ENCODE measurements at regions of chr2 and their contacts with region 1.

Region 1: GRCh38 chr2:85888684-85889626 is at the start of gene ST3GAL5:
- DNase-seq: peak; percentile 52 to 94
- H3K4me3 ChIP-seq: peak within 1 kb of the TSS; percentile 85 to 95
- H3K27ac ChIP-seq: peak within 1 kb of the TSS; percentile 85 to 88
- H3K4me1 ChIP-seq: peaks cover 4 to 36% of the 10 kb centered on the region in 2 donors
- H3K27me3 ChIP-seq: no peaks in the 10 kb centered on the region
- CTCF ChIP-seq: peak; percentile 57 to 72 (median 58)
- total RNA-seq, gene ST3GAL5: 21.0 TPM

Region 2: DNA sequence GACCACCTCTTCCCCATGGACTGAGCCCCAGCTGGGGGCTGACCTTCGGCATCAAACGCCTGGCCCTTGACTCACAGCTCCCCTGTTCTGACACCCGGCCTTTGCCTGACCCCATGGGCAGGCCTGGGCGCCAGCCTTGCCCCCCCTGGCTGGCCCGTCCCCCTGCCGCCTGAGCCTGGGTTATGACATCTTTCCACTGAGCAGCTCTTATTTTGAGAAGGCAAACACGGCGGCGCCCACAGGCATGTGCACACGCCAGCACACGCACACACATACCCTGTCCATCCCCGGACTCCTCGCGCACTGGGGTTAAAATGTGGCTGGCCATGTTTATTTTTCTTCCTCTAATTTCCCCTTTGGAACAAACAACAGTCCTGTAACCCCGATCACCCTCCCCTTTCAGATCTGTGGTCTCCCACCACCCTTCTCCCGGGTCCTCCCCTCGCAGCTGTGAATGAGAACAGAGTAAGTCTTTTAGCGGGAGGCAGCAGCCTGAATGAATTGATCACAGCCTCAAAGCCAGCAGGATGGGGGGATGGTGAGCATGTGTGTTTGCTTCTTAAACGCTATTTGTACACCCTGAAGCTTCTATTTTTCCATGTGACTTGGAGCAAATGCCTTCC is 147.0 kb before region 1 on chr2:
- intact Hi-C with region 1: loop called (anchors 5 kb)
- DNase-seq: peak; percentile 78 to 96
- H3K4me3 ChIP-seq: peak overlapping the region in 1 of 2 donors; percentile 46
- H3K27ac ChIP-seq: peak overlapping the region; percentile 97 to 98
- H3K4me1 ChIP-seq: peaks cover 36 to 65% of the 10 kb centered on the region in 2 donors
- H3K27me3 ChIP-seq: no peaks in the 10 kb centered on the region
- CTCF ChIP-seq: no peak

Region 3: DNA sequence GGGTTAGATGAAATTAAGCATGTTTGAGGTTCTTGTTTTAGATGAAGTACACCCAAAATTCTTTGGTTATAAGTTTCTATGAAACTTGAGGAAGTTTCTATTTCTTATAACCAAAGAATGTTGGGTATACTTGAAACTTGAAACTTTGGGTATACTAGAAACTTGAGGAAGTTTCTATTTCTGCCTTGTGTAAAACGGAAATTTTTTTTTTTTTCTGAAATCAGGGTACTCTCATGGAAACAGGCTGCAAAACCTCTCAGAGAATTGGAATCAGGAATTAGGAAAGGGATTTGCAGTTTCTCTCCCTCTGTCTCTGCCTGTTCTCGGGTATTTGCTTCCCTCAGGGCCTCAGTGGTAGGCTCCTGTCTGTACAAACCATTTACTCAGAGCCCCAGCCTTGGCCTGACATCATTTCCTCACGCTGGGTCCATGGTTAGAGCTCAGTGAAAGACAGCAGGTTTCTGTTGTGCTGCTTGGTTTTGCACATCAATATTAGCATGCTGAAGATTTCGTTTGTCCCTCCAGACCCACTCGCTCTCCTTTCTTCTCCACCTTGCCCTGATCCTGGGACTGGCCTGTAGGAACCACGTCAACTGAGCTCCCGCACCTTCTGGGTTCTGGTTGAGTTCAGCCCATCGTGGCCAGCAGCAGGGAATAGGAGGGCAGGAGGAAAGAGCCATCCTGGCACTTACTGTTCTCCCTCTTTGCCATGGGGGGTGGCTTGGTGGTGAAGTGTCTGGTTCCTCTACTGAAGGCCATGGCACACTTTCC is 110.3 kb after region 1 on chr2:
- intact Hi-C with region 1: loop called (anchors 2 kb)
- DNase-seq: peak in 1 of 2 donors; percentile 69
- H3K4me3 ChIP-seq: peak overlapping the region in 1 of 2 donors; percentile 37
- H3K27ac ChIP-seq: peak overlapping the region; percentile 92 to 95
- H3K4me1 ChIP-seq: peaks cover 36 to 60% of the 10 kb centered on the region in 2 donors
- H3K27me3 ChIP-seq: no peaks in the 10 kb centered on the region
- CTCF ChIP-seq: no peak

Region 4: GRCh38 chr2:86011449-86011941 is 122.5 kb after region 1 on chr2:
- intact Hi-C with region 1: no loop called
- DNase-seq: peak in 1 of 2 donors; percentile 27
- H3K4me3 ChIP-seq: no peak overlapping the region
- H3K27ac ChIP-seq: no peak overlapping the region
- H3K4me1 ChIP-seq: no peaks in the 10 kb centered on the region
- H3K27me3 ChIP-seq: no peaks in the 10 kb centered on the region
- CTCF ChIP-seq: no peak

Region 5: GRCh38 chr2:86035883-86036668 is 147.1 kb after region 1 on chr2:
- intact Hi-C with region 1: loop called (anchors 2 kb)
- DNase-seq: peak; percentile 54 to 83
- H3K4me3 ChIP-seq: no peak overlapping the region
- H3K27ac ChIP-seq: peak overlapping the region; percentile 84 to 89
- H3K4me1 ChIP-seq: peaks cover 22 to 28% of the 10 kb centered on the region in 2 donors
- H3K27me3 ChIP-seq: no peaks in the 10 kb centered on the region
- CTCF ChIP-seq: peak in 2 of 3 experiments; percentile 15 to 17

Region 6: DNA sequence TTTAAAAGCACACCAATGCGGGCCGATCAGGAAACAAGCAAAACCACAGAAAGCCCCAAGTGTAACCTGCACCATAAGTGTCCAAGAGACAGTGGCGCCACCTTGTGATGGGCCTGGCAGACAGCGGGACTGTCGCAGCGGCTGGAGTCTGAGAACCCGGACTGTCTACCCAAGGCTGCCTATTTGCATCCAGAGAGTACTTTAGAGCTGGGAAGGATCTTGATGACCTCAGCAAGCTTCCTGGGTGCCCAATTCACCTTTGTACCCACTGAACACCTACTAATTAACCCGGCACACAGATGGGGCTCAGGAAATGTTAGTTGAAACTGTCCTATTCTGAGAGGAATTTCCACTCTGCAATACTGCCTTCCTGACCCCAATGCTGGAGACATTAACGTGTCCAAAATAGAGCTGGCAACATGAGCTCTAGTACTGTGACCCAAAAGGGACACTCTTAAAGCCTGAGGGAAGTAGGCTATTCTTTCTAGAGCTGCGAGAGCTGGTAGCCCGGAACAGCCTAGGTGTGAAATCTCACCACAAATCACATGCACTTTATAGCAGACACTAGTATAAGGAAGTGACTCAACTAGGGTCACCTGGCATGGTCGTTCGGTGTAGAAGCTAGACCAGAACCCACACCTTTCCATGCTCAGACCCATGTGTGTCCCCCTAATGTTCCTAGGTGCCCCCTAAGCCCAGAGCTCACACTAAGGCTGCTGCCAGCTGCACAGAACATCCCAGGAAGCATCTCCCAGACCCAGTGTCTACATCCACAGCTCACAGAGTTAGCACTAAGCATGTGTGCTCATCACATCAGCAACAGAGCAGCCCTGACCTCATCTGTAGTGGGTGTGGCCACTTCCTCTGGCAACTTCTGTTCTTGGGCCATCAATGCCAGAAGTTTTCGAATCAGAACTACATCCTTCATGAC is 191.3 kb after region 1 on chr2:
- intact Hi-C with region 1: loop called (anchors 2 kb)
- DNase-seq: peak; percentile 50 to 89
- H3K4me3 ChIP-seq: no peak overlapping the region
- H3K27ac ChIP-seq: no peak overlapping the region
- H3K4me1 ChIP-seq: peaks cover 0 to 3% of the 10 kb centered on the region in 2 donors
- H3K27me3 ChIP-seq: no peaks in the 10 kb centered on the region
- CTCF ChIP-seq: peak; percentile 66 to 85 (median 71)

Measured in ascending aorta (tissue), 2 donors.